Left ventricle myocardium inferior (tissue), 1 donor: ENCODE measurements at regions of chr11 and their contacts with region 1.

Region 1: DNA sequence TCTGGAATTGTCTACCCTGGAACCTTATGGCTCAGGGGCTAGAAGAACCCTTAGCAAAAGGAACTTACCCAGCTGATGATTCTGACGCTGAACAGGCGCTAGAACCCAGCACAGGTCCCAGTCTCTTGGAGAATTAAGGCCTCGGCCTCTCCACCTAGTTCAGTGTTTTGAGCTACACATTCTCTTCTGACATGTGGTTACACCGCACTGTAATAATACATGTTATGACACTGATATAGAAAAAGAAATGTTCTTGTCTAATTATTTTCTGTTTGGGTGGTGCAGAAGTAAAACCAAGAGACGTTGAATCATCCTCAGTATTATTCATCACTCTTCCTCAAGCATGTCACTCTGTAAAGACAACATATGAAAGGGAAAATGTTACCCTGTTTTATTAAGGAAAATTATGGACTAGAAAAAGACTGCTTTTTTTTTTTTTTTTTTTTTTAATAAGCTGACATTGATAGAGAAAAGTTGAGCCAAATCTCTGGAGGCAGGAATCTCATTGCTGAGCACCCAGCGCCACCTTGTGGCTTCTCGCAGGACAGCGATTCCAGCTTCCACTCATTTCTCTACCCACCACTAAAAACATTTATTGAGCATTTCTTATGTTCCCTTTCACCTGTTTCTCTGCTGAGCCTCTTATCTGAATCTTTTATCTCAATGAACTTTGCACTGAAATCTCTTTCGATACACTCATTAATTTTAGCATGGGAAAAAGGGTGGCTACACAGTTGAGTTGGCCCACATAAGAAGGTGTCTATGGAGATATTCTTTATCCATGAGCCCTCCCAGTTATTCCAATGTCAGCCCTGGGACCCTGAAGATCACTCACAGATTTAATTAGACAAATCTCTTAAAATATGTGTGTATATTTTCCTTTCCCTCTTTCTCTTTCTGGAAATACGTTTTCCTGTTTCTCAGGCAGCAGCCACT is 12.6 kb upstream of the APLNR start:
- DNase-seq: peak; percentile 62
- H3K4me3 ChIP-seq: peak overlapping the region; percentile 34
- H3K27ac ChIP-seq: peak overlapping the region; percentile 53
- H3K4me1 ChIP-seq: peaks cover 34% of the 10 kb centered on the region
- H3K27me3 ChIP-seq: peaks cover 5% of the 10 kb centered on the region
- CTCF ChIP-seq: peak; percentile 84

Region 2: GRCh38 chr11:57124917-57125316 is 124.7 kb before region 1 on chr11:
- intact Hi-C with region 1: loop called (anchors 5 kb)
- DNase-seq: no peak
- H3K4me3 ChIP-seq: no peak overlapping the region
- H3K27ac ChIP-seq: no peak overlapping the region
- H3K4me1 ChIP-seq: peaks cover 24% of the 10 kb centered on the region
- H3K27me3 ChIP-seq: peaks cover 7% of the 10 kb centered on the region
- CTCF ChIP-seq: no peak

Region 3: DNA sequence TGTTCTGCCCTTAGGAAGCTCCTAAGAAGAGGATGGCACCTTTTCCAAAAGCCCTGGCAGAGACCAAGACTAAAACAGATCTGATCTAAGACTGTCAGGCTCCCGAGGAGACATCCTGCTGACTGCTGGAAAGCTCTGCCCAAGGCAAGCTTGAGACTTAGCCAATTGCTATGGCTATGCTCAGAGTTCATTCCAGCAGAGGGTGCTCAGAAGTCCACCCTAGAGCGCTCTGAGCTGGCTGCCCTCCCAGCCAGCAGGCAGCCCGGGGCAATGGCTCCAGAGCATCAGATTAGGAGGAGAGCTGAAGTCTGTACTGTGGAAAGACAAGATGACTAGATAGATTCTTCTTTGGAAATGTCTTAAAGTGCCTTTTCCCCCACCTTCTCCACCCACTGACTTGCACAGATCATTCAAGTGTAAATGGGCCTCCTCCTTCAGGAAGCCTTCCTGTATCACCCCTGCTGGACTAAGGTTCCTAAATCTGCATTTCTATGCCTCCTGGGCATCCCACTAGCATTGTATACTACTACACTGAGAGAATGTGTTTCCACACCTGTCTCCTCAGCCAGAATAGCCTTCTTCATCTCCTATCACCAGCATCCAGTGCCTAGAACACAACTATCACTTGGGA is 44.5 kb before region 1 on chr11:
- intact Hi-C with region 1: no loop called
- DNase-seq: no peak
- H3K4me3 ChIP-seq: no peak overlapping the region
- H3K27ac ChIP-seq: peak overlapping the region; percentile 85
- H3K4me1 ChIP-seq: peaks cover 78% of the 10 kb centered on the region
- H3K27me3 ChIP-seq: peaks cover 4% of the 10 kb centered on the region
- CTCF ChIP-seq: peak; percentile 34

Region 4: GRCh38 chr11:57406337-57406904 is 156.8 kb after region 1 on chr11:
- intact Hi-C with region 1: no loop called
- DNase-seq: peak; percentile 24
- H3K4me3 ChIP-seq: no peak overlapping the region
- H3K27ac ChIP-seq: peak overlapping the region; percentile 79
- H3K4me1 ChIP-seq: peaks cover 39% of the 10 kb centered on the region
- H3K27me3 ChIP-seq: no peaks in the 10 kb centered on the region
- CTCF ChIP-seq: no peak